GM12878 (cell line): ENCODE measurements at regions of chr19 and their contacts with region 1.

Region 1: DNA sequence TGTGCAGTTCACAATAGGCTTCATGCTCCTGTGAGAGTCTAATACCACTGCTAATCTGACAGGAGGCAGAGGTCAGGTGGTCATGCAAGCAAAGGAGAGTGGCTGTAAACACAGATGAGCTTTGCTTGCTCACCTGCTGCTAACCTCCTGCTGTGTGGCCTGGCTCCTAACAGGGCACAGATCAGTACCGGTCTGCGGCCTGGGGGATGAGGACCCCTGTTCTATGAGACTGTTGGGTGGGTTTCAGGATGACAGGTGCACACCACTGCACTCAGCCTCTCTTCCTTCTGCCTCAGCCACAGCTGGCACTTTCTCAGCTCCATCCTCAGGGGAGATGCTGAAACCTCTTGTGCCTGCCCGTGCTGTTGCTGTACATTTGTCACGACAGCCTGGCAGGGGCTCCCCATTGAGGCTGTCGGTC is 9.7 kb downstream of the CLEC4G start:
- DNase-seq: peak; percentile 70
- ATAC-seq: peak; percentile 77
- H3K4me3 ChIP-seq: no peak overlapping the region
- H3K27ac ChIP-seq: 0 out of 2 replicates have a peak overlapping the region, but pooled peaks have one; percentile 9
- H3K4me1 ChIP-seq: peaks cover 16% of the 10 kb centered on the region
- H3K27me3 ChIP-seq: no peaks in the 10 kb centered on the region
- CTCF ChIP-seq: no peak
- EP300 ChIP-seq: no peak
- POLR2A ChIP-seq: no peak
- RAD21 ChIP-seq: no peak

Region 2: DNA sequence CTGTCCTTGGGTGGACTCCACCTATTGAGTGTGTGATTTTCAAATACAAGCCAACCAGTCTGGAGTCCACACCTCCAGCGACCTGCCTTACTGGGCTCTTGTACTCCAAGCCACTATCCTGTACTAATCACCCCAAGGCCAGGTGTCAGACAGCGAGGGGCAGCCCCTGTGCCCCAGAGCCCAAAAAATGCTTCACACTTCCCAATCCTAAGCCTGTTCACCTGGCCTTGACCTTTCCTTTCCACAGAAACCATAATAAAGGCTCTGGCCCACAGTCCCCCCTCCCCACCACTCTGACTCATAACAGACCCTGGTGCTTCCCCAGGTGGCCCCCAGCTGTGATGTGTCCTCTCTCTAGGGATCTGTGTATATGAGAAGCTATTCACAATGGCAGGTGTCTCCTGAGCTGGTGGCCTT is 21.2 kb after region 1 on chr19:
- CTCF ChIA-PET with region 1: no interaction called
- POLR2A ChIA-PET with region 1: interaction called, 3 read pairs
- RAD21 ChIA-PET with region 1: no interaction called
- SMC1A ChIA-PET with region 1: interaction called, 5 read pairs
- in situ Hi-C with region 1: no loop called
- intact Hi-C with region 1: loop called (anchors 1 kb)
- DNase-seq: peak; percentile 53
- ATAC-seq: peak; percentile 97
- H3K4me3 ChIP-seq: no peak overlapping the region
- H3K27ac ChIP-seq: no peak overlapping the region
- H3K4me1 ChIP-seq: peaks cover 30% of the 10 kb centered on the region
- H3K27me3 ChIP-seq: no peaks in the 10 kb centered on the region
- CTCF ChIP-seq: no peak
- EP300 ChIP-seq: peak; percentile 86 to 88; a peak in 3 of 4 replicates
- POLR2A ChIP-seq: no peak
- RAD21 ChIP-seq: no peak